Left ventricle myocardium inferior (tissue), 1 donor: ENCODE measurements at regions of chr12 and their contacts with region 1.

Region 1: GRCh38 chr12:95998611-95999286 is 2.6 kb upstream of the HAL start:
- DNase-seq: no peak
- H3K4me3 ChIP-seq: no peak overlapping the region
- H3K27ac ChIP-seq: no peak overlapping the region
- H3K4me1 ChIP-seq: no peaks in the 10 kb centered on the region
- H3K27me3 ChIP-seq: no peaks in the 10 kb centered on the region
- CTCF ChIP-seq: peak; percentile 81

Region 2: GRCh38 chr12:95582230-95583058 is 416.3 kb before region 1 on chr12:
- intact Hi-C with region 1: loop called (anchors 5 kb)
- DNase-seq: no peak
- H3K4me3 ChIP-seq: no peak overlapping the region
- H3K27ac ChIP-seq: no peak overlapping the region
- H3K4me1 ChIP-seq: peaks cover 6% of the 10 kb centered on the region
- H3K27me3 ChIP-seq: no peaks in the 10 kb centered on the region
- CTCF ChIP-seq: peak; percentile 76

Region 3: GRCh38 chr12:95918194-95918993 is 80.4 kb before region 1 on chr12:
- intact Hi-C with region 1: loop called (anchors 5 kb)
- DNase-seq: no peak
- H3K4me3 ChIP-seq: no peak overlapping the region
- H3K27ac ChIP-seq: no peak overlapping the region
- H3K4me1 ChIP-seq: no peaks in the 10 kb centered on the region
- H3K27me3 ChIP-seq: peaks cover 10% of the 10 kb centered on the region
- CTCF ChIP-seq: peak; percentile 89